Activated naive CD4-positive, alpha-beta T cell treated with anti-CD3 and anti-CD28 coated beads for 36 hours (primary cell): ENCODE measurements at regions of chr7 and their contacts with region 1.

Region 1: DNA sequence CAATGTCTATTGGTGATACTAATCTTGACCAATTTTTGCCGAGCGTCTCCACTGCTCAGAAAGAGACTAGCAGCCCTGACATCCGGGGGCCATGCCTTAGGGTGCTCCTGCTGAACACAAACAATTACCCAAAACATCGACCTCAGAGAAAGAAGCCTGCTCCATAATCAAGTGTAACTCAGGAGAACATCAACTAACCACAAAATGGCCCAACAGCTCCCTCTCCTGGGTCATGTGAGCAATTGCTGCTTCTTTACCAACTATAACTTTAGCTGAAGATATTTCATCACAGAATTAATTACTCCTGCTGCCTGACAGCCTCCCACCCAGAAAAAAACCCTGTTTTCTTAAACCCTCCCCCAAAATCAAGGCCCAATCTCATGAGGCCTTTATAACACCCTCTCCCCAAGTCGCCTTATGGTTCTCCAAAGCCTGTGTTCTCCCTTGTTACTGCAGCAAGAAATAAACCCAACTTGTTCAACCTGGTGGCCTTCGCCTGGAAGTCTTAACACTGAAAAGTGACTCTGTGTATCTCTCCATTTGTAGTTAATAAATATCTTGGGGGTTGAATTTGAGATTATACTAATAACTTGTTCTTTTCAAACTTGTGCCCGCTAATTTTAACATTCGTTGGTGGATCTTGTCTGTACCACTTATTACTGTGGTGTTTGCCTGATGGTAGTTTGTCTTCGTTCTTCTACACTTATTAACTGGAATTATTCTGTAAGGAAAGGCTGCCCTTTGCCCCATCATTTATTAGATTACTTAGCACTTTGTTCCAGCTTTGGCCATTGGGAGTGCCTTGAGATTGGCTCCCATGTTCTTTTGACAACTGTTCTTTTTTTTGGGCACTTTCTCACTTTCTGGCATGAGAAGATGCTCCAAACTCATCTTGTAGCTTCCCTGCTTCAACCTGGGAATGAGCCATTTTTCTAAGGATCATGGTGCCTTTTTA is 21.2 kb upstream of the RAMP3 start:
- DNase-seq: peak; percentile 87
- H3K4me3 Mint-ChIP-seq: no peak overlapping the region
- H3K27ac Mint-ChIP-seq: no peak overlapping the region
- H3K4me1 Mint-ChIP-seq: peaks cover 7% of the 10 kb centered on the region
- H3K27me3 Mint-ChIP-seq: no peaks in the 10 kb centered on the region

Region 2: GRCh38 chr7:44587843-44588711 is 548.3 kb before region 1 on chr7:
- CTCF ChIA-PET with region 1: interaction called, 3 read pairs
- intact Hi-C with region 1: loop called (anchors 1 kb)
- DNase-seq: peak; percentile 83
- H3K4me3 Mint-ChIP-seq: no peak overlapping the region
- H3K27ac Mint-ChIP-seq: no peak overlapping the region
- H3K4me1 Mint-ChIP-seq: peaks cover 4% of the 10 kb centered on the region
- H3K27me3 Mint-ChIP-seq: peaks cover 1% of the 10 kb centered on the region

Region 3: DNA sequence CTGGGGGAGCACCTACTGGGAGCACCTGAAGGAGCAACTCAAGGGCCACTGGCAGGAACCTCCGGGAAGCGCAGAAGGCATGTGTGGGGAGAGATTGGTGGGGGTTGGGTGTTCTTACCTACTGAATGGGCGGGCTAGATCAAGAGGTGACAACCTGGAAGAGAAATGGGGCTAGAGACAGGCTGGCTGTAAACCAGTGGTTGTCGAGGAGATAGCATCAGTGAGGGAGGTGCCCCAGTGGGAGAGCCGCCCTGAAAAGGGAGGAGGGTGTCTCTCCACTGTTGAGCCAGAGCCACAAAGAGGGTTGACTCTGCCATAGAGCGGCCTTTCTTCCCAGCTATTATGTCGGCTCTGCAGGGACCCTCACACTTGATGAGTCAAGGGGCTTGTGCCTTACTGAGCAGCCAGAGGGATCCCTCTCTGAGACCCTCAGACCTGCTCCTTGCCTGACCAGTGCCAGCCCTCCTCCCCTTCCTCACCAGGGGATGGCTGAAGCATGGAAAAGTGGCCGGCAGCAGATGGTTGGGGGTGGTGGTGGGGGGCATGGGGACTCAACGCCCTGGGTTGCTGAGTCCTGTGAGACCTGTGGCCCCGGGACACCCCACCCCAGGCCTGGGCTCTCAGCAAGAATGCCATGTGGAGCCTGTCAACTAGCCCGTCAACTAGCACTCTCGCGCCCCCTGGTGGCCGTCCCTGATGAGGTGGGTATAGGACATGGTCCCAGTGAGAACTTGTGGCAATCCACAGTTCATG is 214.6 kb before region 1 on chr7:
- CTCF ChIA-PET with region 1: interaction called, 13 read pairs
- intact Hi-C with region 1: loop called (anchors 1 kb)
- DNase-seq: peak; percentile 99
- H3K4me3 Mint-ChIP-seq: no peak overlapping the region
- H3K27ac Mint-ChIP-seq: peak overlapping the region; percentile 30
- H3K4me1 Mint-ChIP-seq: peaks cover 8% of the 10 kb centered on the region
- H3K27me3 Mint-ChIP-seq: no peaks in the 10 kb centered on the region

Region 4: DNA sequence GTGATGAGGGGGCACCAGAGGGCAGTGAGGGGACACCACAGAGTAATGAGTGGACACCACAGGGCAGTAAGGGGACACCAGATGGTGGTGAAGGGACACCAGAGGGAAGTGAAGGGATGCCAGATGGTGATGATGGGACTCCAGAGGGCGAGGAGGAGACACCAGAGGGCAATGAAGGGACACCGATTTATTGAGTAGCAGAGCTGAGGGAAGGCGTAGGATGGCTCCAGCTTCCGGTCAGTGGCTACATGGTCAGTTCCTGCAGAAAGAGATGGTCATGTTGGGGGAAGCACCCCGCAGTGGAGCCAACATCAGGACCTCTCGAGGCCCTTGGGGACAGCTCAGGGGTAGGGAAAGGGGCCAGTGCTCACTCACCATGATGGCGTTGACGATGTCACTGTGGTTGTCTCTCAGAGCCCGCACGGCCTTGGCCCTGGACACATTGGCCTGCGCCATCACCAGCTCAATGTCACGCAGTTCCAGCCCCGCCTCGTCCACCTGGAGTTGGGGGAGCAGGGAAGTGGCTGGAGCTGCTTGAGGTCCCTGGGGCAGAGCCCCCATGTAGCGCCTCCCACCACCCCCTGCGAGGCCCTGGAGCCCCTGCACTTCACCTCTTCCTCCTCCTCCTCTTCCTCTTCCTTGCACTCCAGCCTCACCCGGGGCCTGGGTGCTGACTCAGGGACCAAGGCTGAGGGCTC is 56.0 kb before region 1 on chr7:
- CTCF ChIA-PET with region 1: interaction called, 7 read pairs
- intact Hi-C with region 1: loop called (anchors 2 kb)
- DNase-seq: peak; percentile 5
- H3K4me3 Mint-ChIP-seq: no peak overlapping the region
- H3K27ac Mint-ChIP-seq: no peak overlapping the region
- H3K4me1 Mint-ChIP-seq: no peaks in the 10 kb centered on the region
- H3K27me3 Mint-ChIP-seq: no peaks in the 10 kb centered on the region

Region 5: GRCh38 chr7:45122975-45123860 is 13.2 kb before region 1 on chr7:
- CTCF ChIA-PET with region 1: interaction called, 29 read pairs
- intact Hi-C with region 1: no loop called
- DNase-seq: no peak
- H3K4me3 Mint-ChIP-seq: no peak overlapping the region
- H3K27ac Mint-ChIP-seq: peak overlapping the region; percentile 46
- H3K4me1 Mint-ChIP-seq: peaks cover 14% of the 10 kb centered on the region
- H3K27me3 Mint-ChIP-seq: no peaks in the 10 kb centered on the region

Region 6: DNA sequence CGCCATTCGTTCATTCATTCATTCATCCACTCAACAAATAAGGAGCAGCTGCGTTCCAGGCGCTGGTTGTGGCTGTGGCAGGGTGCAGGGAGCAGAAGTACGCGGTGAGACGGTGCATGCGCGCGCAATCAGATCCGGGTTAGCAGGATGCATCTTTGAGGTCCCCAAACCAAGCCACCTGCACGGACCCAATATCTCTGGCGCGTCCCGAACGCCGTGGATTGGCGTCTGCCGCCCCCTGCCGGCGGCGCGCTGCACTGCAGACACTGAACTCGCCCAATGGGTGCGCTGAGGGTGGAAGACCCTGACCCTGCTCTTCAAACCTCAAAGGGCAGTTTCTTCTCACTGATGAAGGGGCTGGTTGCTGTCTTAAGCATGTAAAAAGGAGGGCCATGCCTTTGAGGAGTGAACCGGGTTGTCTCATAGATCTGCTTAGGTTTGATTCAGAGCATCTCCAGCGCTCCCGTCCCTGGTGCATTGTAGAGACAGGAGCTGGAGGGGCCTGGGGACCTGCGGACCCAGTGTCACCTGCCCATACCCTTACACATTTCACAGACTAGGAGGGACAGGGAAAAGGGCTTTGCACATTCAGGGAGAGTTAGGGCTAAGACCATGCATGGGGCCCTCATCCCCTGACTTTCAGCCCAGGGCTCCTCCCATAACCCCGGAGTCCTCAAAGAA is 123.7 kb after region 1 on chr7:
- CTCF ChIA-PET with region 1: interaction called, 10 read pairs
- intact Hi-C with region 1: no loop called
- DNase-seq: peak; percentile 75
- H3K4me3 Mint-ChIP-seq: no peak overlapping the region
- H3K27ac Mint-ChIP-seq: no peak overlapping the region
- H3K4me1 Mint-ChIP-seq: no peaks in the 10 kb centered on the region
- H3K27me3 Mint-ChIP-seq: peaks cover 10% of the 10 kb centered on the region